HEK293T (cell line): ENCODE measurements at regions of chr15 and their contacts with region 1.

Region 1: GRCh38 chr15:85840065-85840801 is 45.5 kb upstream of the KLHL25 start:
- DNase-seq: peak; percentile 94

Region 2: DNA sequence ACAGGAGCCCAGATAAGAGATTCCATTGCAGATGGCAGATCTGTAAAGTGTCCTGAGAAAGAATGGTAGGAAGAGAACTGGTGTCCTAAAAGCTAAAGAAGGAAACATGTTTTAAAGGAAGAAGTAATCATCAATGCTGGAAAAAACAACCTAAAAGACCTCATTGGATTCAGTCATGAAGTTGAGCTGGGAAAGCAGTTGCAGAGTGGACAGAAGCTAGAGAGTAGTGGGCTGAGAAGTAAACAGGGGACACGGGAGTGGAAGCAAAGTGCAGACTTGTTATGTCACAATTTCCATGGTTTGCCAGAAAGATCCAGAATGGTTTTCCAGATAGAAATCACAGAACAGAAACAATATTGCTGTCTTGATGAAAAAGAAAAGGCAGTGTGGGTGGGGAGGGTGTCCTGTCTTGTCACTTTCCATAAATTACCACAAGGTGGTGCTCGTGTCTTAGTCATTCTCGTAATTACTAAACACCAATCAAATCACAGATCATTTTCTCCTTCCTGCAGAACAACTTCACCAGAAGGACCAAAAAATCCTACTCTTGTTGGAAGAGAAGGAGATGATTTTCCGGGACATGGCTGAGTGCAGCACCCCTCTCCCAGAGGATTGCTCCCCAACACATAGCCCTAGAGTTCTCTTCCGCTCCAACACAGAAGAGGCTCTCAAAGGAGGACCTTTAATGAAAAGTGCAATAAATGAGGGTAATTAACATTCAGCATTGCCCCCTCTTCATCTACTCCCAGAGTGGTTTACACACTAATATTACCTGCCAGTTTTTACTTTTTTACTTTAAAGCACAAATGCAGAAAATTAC is 110.0 kb before region 1 on chr15:
- CTCF ChIA-PET with region 1: interaction called, 20 read pairs
- POLR2A ChIA-PET with region 1: no interaction called
- DNase-seq: peak; percentile 72

Region 3: DNA sequence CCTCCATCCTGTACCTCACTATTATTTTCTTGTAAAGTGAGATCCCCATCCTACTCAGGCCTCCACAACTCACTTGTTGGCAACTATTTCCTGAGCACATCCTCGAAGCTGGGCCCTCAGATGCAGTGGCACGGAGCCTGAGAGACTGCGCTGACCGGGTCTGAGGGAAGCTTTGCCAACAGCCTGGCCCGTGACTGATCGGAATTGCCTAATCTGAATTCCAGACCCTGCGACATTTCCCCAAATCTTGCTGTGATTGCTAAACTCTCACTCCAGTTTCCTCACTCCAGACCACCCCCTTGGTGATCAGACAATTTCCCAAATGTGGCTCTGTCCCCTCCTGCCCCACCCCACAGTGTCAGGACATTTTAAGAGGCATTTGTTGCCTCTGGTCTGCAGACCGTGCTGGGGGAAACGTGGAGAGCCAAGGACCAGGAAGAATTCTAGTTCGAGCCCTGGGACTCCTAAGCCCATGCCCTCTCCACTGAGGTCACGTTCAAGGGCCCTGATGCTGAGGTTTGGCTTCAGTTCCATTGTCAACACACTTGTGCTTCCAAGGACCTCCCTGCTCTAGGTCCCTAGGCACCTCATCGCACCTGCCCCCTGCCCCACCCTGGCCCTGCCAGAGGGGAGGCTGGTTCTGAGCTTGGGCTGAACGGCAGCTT is 68.3 kb before region 1 on chr15:
- CTCF ChIA-PET with region 1: no interaction called
- POLR2A ChIA-PET with region 1: no interaction called
- DNase-seq: no peak